ENCODE measurements at regions of chr4 and their contacts with region 1.

Region 1: DNA sequence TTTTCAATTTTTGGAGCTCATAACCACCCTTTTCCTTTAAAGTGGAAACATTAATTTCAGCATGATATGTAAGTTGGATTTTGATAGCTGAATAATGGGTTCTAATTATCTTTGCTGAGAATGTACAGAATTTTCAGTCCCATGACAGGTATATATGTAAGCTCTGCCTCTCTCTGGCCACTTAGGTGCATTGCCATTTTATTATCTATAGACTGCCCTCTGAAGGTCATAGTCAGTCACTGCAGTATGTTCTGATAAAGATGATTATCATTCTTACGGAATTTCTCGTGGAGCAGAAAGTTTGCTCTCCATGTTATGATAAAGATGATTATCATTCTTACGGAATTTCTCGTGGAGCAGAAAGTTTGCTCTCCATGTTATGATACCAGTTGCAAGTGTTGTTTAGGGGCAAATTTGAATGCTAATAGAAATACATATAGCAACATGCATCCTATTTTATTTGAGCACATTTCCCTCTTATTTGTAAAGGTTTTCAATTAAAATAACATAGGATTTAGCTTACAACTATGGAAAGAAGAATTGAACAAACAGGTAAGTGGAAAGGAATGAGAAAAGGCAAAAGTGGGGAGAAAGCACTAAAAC is 10.4 kb downstream of the AFP start:
- DNase-seq: peak; percentile 41 to 67 (median 50)
- ATAC-seq: peak; percentile 90
- H3K4me3 ChIP-seq: no peak overlapping the region
- H3K27ac ChIP-seq: no peak overlapping the region
- H3K4me1 ChIP-seq: peaks cover 5 to 11% of the 10 kb centered on the region in 2 experiments; a peak in 3 of 5 replicates
- H3K27me3 ChIP-seq: no peaks in the 10 kb centered on the region
- CTCF ChIP-seq: peak; percentile 82 to 99 (median 98)
- EP300 ChIP-seq: no peak
- POLR2A ChIP-seq: no peak
- RAD21 ChIP-seq: peak; percentile 72 to 88

Region 2: DNA sequence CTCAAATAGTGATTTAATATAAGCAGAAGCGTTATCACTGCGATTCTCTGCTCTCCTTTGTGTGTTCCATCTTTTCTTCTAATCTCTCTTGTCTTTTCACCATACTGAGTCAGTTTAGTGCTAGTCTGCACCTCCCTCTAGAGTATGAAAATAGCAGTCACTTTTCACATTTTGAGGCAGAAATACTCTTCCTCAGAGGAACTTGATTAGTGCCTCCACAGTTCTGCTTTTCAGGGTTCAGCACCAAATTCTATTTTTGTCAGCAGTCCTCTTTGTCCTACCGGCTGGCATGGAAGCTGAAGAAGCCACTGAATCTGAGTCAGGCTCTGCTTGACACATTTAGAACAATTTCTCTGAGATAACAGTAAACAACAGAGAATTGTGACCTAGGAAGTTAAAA is 138.2 kb before region 1 on chr4:
- CTCF ChIA-PET with region 1: interaction called, 3 read pairs
- POLR2A ChIA-PET with region 1: no interaction called
- in situ Hi-C with region 1: no loop called
- intact Hi-C with region 1: loop called (anchors 10 kb)
- DNase-seq: peak in 1 of 4 experiments; percentile 35
- ATAC-seq: peak; percentile 78
- H3K4me3 ChIP-seq: no peak overlapping the region
- H3K27ac ChIP-seq: no peak overlapping the region
- H3K4me1 ChIP-seq: no peaks in the 10 kb centered on the region
- H3K27me3 ChIP-seq: no peaks in the 10 kb centered on the region
- CTCF ChIP-seq: peak; percentile 44 to 56 (median 49); a peak in 5 of 6 replicates
- EP300 ChIP-seq: no peak
- POLR2A ChIP-seq: no peak
- RAD21 ChIP-seq: peak; percentile 31 to 63; a peak in 3 of 4 replicates

Region 3: GRCh38 chr4:73341454-73341853 is 105.0 kb before region 1 on chr4:
- CTCF ChIA-PET with region 1: interaction called, 12 read pairs
- POLR2A ChIA-PET with region 1: no interaction called
- in situ Hi-C with region 1: no loop called
- intact Hi-C with region 1: loop called (anchors 1 kb)
- DNase-seq: peak; percentile 12 to 67 (median 20)
- ATAC-seq: peak; percentile 93
- H3K4me3 ChIP-seq: no peak overlapping the region
- H3K27ac ChIP-seq: no peak overlapping the region
- H3K4me1 ChIP-seq: peaks cover 0 to 2% of the 10 kb centered on the region in 2 experiments; a peak in 1 of 5 replicates
- H3K27me3 ChIP-seq: no peaks in the 10 kb centered on the region
- CTCF ChIP-seq: peak; percentile 65 to 84 (median 83)
- EP300 ChIP-seq: no peak
- POLR2A ChIP-seq: no peak
- RAD21 ChIP-seq: peak; percentile 88 to 91

Region 4: GRCh38 chr4:73376976-73377375 is 69.5 kb before region 1 on chr4:
- CTCF ChIA-PET with region 1: no interaction called
- POLR2A ChIA-PET with region 1: no interaction called
- in situ Hi-C with region 1: no loop called
- intact Hi-C with region 1: no loop called
- DNase-seq: no peak
- ATAC-seq: no peak
- H3K4me3 ChIP-seq: no peak overlapping the region
- H3K27ac ChIP-seq: no peak overlapping the region
- H3K4me1 ChIP-seq: no peaks in the 10 kb centered on the region
- H3K27me3 ChIP-seq: no peaks in the 10 kb centered on the region
- CTCF ChIP-seq: no peak
- EP300 ChIP-seq: no peak
- POLR2A ChIP-seq: no peak
- RAD21 ChIP-seq: no peak

Region 5: DNA sequence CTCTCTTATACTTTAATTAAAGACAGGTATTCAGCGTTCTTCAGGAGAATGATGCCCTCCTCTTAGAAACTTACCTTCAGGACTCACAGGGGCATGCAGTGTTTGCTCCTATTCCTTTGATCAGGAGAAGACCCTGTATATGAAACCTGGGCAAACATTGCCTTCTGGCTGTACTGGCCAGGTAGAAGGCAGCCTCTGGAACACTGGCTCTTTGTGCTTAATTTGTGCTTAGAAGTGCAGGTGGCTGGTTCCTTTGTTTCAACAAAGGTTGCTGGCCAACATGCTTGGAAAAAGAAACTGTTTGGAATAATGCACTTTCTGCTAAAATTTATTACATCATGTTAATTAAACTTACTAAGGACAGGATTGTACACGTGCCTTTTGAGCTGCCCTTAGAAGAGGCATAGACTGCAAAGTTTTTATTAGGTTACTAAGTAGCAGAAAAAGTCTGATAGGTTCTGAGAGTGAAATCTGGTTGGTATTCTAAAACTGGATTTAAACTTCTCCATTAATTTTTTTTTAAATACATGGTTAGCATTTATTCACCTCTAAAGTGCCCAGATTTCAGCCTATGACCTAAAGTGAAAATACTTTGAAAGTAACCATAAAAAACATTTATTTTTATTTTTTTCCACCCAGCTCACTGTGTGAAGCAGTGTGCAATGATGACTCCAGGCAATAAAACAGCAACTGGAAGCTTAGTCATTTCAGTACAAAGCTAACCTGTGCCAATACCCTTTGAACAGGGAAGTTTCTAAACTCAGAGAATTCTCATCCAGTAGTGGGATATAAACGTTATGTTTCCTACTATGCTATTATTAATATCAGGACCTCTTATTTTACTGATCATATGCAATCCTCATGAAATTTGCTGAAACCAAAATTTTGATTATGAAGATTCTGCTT is 162.5 kb after region 1 on chr4:
- CTCF ChIA-PET with region 1: no interaction called
- POLR2A ChIA-PET with region 1: no interaction called
- in situ Hi-C with region 1: no loop called
- intact Hi-C with region 1: no loop called
- DNase-seq: no peak
- ATAC-seq: no peak
- H3K4me3 ChIP-seq: no peak overlapping the region
- H3K27ac ChIP-seq: no peak overlapping the region
- H3K4me1 ChIP-seq: no peaks in the 10 kb centered on the region
- H3K27me3 ChIP-seq: peaks cover 0 to 4% of the 10 kb centered on the region in 2 experiments; a peak in 1 of 5 replicates
- CTCF ChIP-seq: no peak
- EP300 ChIP-seq: no peak
- POLR2A ChIP-seq: no peak
- RAD21 ChIP-seq: no peak

Measured in K562 (cell line).